ENCODE measurements at regions of chr5 and their contacts with region 1.

Region 1: DNA sequence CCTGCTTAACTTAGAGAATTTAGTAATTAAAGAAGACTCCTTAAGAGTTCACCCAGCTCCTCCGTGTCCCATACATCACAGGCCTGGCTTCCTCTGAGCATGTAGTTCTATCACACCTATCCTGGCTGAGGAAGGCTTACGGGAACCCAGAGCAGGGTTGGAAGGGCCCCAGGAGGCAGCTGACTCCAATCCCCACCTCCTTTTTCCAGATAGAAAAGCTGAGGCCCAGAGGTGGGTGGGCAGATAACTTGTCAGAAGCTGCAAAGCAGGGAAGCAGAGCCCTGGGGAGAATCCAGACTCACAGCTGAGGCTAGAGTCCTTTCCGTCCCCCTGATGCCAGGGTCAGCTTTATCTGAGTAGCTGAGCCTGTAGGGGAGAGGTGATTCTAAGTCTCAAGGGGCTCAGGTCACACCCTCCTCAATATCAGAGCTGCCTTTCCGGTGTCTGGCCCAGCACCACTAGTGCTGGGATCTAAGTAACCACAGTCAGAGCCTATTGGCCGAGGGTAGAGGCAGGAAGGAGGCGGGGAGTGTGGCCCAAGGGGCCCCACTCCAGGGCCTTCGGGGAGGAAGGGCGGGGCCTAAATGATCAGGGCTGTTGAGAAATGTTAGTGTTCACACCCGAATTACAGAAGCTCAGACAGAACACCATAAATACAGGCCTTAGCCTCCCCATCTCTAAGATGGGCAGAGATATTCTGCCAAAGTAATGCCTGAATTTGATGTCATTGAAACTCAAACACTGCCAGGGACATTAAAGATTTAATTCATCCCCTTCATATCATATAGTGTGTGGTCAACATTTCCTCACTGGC is 9.9 kb downstream of the CCDC69 start:
- DNase-seq: peak; percentile 77 to 93
- ATAC-seq: peak; percentile 86 to 97 (median 91)
- H3K4me3 ChIP-seq: peak overlapping the region; percentile 48
- H3K4me3 Mint-ChIP-seq: peak overlapping the region; percentile 88
- H3K27ac ChIP-seq: peak overlapping the region; percentile 97
- H3K27ac Mint-ChIP-seq: peak overlapping the region; percentile 88 to 92
- H3K4me1 ChIP-seq: peaks cover 99% of the 10 kb centered on the region
- H3K4me1 Mint-ChIP-seq: peaks cover 80 to 81% of the 10 kb centered on the region in 2 donors
- H3K27me3 ChIP-seq: no peaks in the 10 kb centered on the region
- H3K27me3 Mint-ChIP-seq: no peaks in the 10 kb centered on the region
- CTCF ChIP-seq: no peak

Region 2: GRCh38 chr5:150409638-150410523 is 804.1 kb before region 1 on chr5:
- intact Hi-C with region 1: loop called (anchors 2 kb)
- DNase-seq: peak in 1 of 2 donors; percentile 77
- ATAC-seq: no peak
- H3K4me3 ChIP-seq: peak overlapping the region; percentile 89
- H3K4me3 Mint-ChIP-seq: peak overlapping the region; percentile 98
- H3K27ac ChIP-seq: peak overlapping the region; percentile 98
- H3K27ac Mint-ChIP-seq: peak overlapping the region; percentile 99 to 100
- H3K4me1 ChIP-seq: peaks cover 81% of the 10 kb centered on the region
- H3K4me1 Mint-ChIP-seq: peaks cover 48 to 53% of the 10 kb centered on the region in 2 donors
- H3K27me3 ChIP-seq: no peaks in the 10 kb centered on the region
- H3K27me3 Mint-ChIP-seq: no peaks in the 10 kb centered on the region
- CTCF ChIP-seq: no peak

Region 3: DNA sequence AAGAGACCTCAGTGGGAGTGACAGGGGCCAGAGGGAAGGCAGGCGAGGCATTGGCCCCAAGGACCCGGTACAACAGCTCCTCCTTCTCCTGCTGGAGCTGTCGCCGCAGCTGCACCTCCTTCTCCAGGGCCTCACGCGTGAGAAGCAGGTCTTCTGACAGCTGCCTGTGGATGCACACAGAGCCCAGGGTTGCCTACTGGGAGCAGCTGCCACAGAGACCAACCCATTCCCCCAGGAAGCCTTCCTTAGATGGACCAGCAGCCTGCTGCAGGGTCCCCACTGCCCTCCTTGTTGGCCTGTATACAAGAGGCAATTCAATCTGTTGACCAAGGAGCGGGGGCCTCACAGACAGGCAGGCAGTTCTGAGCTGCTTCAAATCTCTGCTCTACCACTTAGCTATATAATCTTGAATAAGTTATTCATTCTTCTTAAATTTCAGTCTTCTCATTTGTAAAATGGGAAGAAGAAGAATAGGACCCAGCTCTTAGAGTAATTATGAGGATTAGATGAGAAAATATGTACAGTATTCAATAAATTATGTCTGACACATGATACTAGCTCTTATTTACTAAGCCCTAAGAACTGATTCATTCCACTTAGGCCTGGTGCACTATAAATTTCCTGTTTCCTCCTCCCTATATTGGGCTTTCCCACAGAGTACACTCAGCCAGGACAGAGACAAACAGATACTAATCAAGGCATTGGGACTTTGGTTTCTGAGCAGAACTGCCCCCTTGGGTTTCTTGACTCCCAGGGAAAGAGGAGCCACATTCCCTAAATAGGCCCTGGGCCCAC is 30.4 kb before region 1 on chr5:
- intact Hi-C with region 1: no loop called
- DNase-seq: no peak
- ATAC-seq: no peak
- H3K4me3 ChIP-seq: no peak overlapping the region
- H3K4me3 Mint-ChIP-seq: no peak overlapping the region
- H3K27ac ChIP-seq: no peak overlapping the region
- H3K27ac Mint-ChIP-seq: peak overlapping the region in 1 of 2 donors; percentile 45
- H3K4me1 ChIP-seq: no peaks in the 10 kb centered on the region
- H3K4me1 Mint-ChIP-seq: peaks cover 13 to 23% of the 10 kb centered on the region in 2 donors
- H3K27me3 ChIP-seq: no peaks in the 10 kb centered on the region
- H3K27me3 Mint-ChIP-seq: no peaks in the 10 kb centered on the region
- CTCF ChIP-seq: no peak

Region 4: DNA sequence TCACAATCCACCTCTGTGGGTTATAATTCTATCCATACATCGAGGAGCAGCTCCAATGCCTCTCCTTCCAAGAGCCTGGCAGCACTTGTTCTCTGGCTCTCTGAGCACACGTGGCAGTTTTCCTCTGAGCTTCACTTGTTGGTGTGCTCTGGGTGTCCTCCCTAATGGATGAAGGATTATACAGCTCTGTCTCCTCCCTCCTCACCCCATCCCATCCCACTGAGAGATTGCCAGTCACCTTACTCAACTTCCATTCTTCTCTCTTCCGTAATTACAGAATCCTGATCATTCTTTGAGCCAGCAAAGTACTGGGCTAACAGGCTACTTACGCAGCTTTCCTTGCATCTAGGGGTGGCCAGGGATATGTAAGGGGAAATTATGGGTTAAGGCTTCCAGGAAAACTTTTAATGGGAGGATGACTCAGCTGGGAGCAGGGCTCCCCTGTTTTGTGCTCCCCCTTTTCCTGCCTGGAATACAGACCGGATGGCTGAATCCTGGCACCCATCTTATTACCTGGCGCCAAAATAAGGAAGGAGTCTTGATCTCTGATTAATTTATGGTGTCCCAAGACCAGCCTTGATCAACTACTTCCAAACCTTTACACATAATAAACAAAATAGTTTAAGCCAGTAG is 16.2 kb after region 1 on chr5:
- intact Hi-C with region 1: no loop called
- DNase-seq: no peak
- ATAC-seq: no peak
- H3K4me3 ChIP-seq: no peak overlapping the region
- H3K4me3 Mint-ChIP-seq: no peak overlapping the region
- H3K27ac ChIP-seq: no peak overlapping the region
- H3K27ac Mint-ChIP-seq: no peak overlapping the region
- H3K4me1 ChIP-seq: peaks cover 16% of the 10 kb centered on the region
- H3K4me1 Mint-ChIP-seq: peaks cover 15 to 16% of the 10 kb centered on the region in 2 donors
- H3K27me3 ChIP-seq: no peaks in the 10 kb centered on the region
- H3K27me3 Mint-ChIP-seq: no peaks in the 10 kb centered on the region
- CTCF ChIP-seq: no peak

Region 5: GRCh38 chr5:151252762-151253604 is 39.0 kb after region 1 on chr5 and contains the start of gene GM2A:
- intact Hi-C with region 1: loop called (anchors 5 kb)
- DNase-seq: peak; percentile 93 to 99
- ATAC-seq: peak; percentile 95 to 99 (median 97)
- H3K4me3 ChIP-seq: peak within 1 kb of the TSS; percentile 59
- H3K4me3 Mint-ChIP-seq: peak within 1 kb of the TSS; percentile 92
- H3K27ac ChIP-seq: peak within 1 kb of the TSS; percentile 51
- H3K27ac Mint-ChIP-seq: peak within 1 kb of the TSS; percentile 85 to 86
- H3K4me1 ChIP-seq: peaks cover 29% of the 10 kb centered on the region
- H3K4me1 Mint-ChIP-seq: peaks cover 34 to 35% of the 10 kb centered on the region in 2 donors
- H3K27me3 ChIP-seq: no peaks in the 10 kb centered on the region
- H3K27me3 Mint-ChIP-seq: peaks cover 5 to 7% of the 10 kb centered on the region in 2 donors
- CTCF ChIP-seq: no peak
- total RNA-seq, gene GM2A: 9.6 to 15.9 (median 15.6) TPM

Region 6: GRCh38 chr5:151740336-151740942 is 526.4 kb after region 1 on chr5:
- intact Hi-C with region 1: no loop called
- DNase-seq: peak; percentile 35 to 81
- ATAC-seq: peak; percentile 41 to 62 (median 48)
- H3K4me3 ChIP-seq: no peak overlapping the region
- H3K4me3 Mint-ChIP-seq: no peak overlapping the region
- H3K27ac ChIP-seq: no peak overlapping the region
- H3K27ac Mint-ChIP-seq: peak overlapping the region in 1 of 2 donors; percentile 9
- H3K4me1 ChIP-seq: peaks cover 19% of the 10 kb centered on the region
- H3K4me1 Mint-ChIP-seq: peaks cover 48 to 50% of the 10 kb centered on the region in 2 donors
- H3K27me3 ChIP-seq: no peaks in the 10 kb centered on the region
- H3K27me3 Mint-ChIP-seq: no peaks in the 10 kb centered on the region
- CTCF ChIP-seq: peak; percentile 88

Measured in natural killer cell (primary cell).